ENCODE measurements at regions of chr3 and their contacts with region 1.

Region 1: DNA sequence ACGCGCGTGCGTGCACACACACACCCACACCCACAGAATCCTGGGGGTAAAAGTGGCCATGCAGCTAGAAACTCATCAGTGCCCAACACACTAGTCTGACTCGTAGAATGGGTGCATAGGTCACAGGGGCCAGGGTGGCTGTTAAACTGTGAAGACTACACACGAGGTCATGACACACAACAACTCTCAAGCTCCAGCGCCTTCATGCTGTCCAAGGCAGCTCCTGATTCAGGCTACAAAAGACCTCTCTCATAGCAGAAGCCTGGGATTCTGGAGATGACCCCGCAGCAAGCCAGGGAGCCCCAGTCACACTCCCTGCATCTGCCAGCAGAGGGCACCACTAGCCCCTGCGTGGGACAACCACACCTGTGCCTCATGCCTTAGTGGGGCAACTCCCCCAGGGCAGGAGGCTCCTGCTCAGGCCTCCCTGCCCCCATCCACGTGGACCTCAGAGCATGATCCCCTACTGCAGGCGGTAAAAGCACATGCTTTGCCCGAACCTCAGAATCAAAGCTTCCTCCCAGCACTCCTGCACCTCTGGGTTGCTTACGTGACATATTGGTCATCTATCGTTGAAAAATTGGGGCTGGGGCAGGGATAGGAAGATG is 93.1 kb downstream of the LRIG1 start:
- DNase-seq: peak; percentile 55 to 84 (median 74)
- ATAC-seq: peak; percentile 86
- H3K4me3 ChIP-seq: no peak overlapping the region
- H3K4me3 Mint-ChIP-seq: no peak overlapping the region
- H3K27ac ChIP-seq: no peak overlapping the region
- H3K27ac Mint-ChIP-seq: no peak overlapping the region
- H3K4me1 ChIP-seq: no peaks in the 10 kb centered on the region
- H3K4me1 Mint-ChIP-seq: no peaks in the 10 kb centered on the region
- H3K27me3 ChIP-seq: no peaks in the 10 kb centered on the region
- H3K27me3 Mint-ChIP-seq: no peaks in the 10 kb centered on the region
- CTCF ChIP-seq: peak; percentile 78

Region 2: DNA sequence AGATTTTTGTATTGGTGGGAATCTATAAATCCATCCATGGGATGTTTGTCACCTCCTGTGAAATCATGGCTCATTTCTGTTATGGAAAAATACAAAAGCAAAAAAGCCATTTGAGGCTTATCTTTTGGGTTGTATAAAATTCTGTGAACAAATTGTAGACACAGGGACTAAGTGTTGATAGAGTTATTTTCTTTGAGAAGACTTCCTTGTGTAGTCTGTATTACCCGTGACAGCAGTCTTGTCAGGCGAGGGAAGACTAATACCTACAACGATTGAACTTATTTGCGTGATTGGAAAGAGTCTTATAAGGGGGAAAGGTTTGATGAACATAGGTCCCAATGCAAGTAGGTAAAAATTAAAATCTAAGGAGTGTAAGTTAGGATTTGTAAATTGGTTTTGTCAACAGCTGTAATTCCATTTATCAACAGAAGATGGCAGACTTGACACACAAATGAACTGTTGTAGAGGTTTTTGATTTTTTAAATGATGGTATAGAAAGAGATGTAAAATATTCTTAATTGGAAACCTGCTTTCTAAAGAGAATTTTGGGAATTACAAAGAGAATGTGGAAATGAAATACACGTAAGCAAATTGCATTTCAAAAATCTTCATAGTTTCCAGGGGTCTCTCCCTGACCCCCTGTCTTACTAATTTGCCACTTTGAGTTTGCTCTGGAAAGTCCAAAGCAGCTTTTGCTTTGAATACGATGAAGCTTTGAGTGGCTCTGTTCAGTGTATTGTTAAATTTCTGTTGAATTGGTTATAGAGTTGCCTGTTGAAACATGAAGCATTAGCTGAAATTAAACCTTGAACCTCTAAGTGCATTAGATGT is 153.7 kb before region 1 on chr3:
- CTCF ChIA-PET with region 1: interaction called, 35 read pairs
- POLR2A ChIA-PET with region 1: no interaction called
- intact Hi-C with region 1: no loop called
- DNase-seq: peak in 2 of 9 experiments; percentile 51 to 60
- ATAC-seq: peak; percentile 38
- H3K4me3 ChIP-seq: no peak overlapping the region
- H3K4me3 Mint-ChIP-seq: no peak overlapping the region
- H3K27ac ChIP-seq: no peak overlapping the region
- H3K27ac Mint-ChIP-seq: no peak overlapping the region
- H3K4me1 ChIP-seq: no peaks in the 10 kb centered on the region
- H3K4me1 Mint-ChIP-seq: peaks cover 8% of the 10 kb centered on the region
- H3K27me3 ChIP-seq: no peaks in the 10 kb centered on the region
- H3K27me3 Mint-ChIP-seq: no peaks in the 10 kb centered on the region
- CTCF ChIP-seq: peak; percentile 84

Region 3: GRCh38 chr3:66276705-66277274 is 130.9 kb before region 1 on chr3:
- CTCF ChIA-PET with region 1: interaction called, 28 read pairs
- POLR2A ChIA-PET with region 1: no interaction called
- intact Hi-C with region 1: loop called in 1 of 2 experiments (anchors 1 kb)
- DNase-seq: peak; percentile 42 to 84 (median 64)
- ATAC-seq: peak; percentile 71
- H3K4me3 ChIP-seq: no peak overlapping the region
- H3K4me3 Mint-ChIP-seq: no peak overlapping the region
- H3K27ac ChIP-seq: no peak overlapping the region
- H3K27ac Mint-ChIP-seq: peak overlapping the region; percentile 34
- H3K4me1 ChIP-seq: peaks cover 10% of the 10 kb centered on the region
- H3K4me1 Mint-ChIP-seq: peaks cover 37% of the 10 kb centered on the region
- H3K27me3 ChIP-seq: no peaks in the 10 kb centered on the region
- H3K27me3 Mint-ChIP-seq: no peaks in the 10 kb centered on the region
- CTCF ChIP-seq: peak; percentile 80

Region 4: DNA sequence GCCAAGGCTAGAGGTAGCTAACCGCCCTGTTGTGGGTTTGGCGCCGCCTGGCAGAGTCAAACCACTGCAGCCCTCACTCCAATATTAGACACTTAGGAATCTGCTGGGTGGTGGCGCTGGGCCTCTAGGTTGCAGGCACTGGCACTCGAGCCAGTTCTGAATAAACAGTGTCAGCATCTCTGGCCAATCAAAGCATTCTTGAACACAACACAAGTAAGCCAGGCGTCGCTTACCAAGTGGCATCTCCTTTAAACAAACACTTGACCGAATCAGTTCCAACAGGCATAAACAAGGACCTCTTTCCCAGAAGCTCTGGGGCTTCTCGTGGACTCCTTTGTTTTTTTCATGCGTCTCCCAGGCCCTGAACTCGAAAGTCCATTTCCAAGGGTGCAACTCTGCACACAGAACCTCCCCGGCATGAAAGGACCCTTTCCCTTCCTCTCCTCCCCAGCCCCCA is 10.8 kb after region 1 on chr3:
- CTCF ChIA-PET with region 1: interaction called, 13 read pairs
- POLR2A ChIA-PET with region 1: no interaction called
- intact Hi-C with region 1: no loop called
- DNase-seq: no peak
- ATAC-seq: no peak
- H3K4me3 ChIP-seq: no peak overlapping the region
- H3K4me3 Mint-ChIP-seq: no peak overlapping the region
- H3K27ac ChIP-seq: no peak overlapping the region
- H3K27ac Mint-ChIP-seq: no peak overlapping the region
- H3K4me1 ChIP-seq: no peaks in the 10 kb centered on the region
- H3K4me1 Mint-ChIP-seq: peaks cover 20% of the 10 kb centered on the region
- H3K27me3 ChIP-seq: no peaks in the 10 kb centered on the region
- H3K27me3 Mint-ChIP-seq: no peaks in the 10 kb centered on the region
- CTCF ChIP-seq: no peak

Region 5: GRCh38 chr3:66472313-66473134 is 64.8 kb after region 1 on chr3:
- CTCF ChIA-PET with region 1: interaction called, 10 read pairs
- POLR2A ChIA-PET with region 1: no interaction called
- intact Hi-C with region 1: no loop called
- DNase-seq: peak in 4 of 9 experiments; percentile 21 to 58 (median 40)
- ATAC-seq: peak; percentile 74
- H3K4me3 ChIP-seq: peak overlapping the region in 1 of 2 experiments; percentile 25
- H3K4me3 Mint-ChIP-seq: peak overlapping the region; percentile 51
- H3K27ac ChIP-seq: no peak overlapping the region
- H3K27ac Mint-ChIP-seq: peak overlapping the region; percentile 18
- H3K4me1 ChIP-seq: peaks cover 14% of the 10 kb centered on the region
- H3K4me1 Mint-ChIP-seq: peaks cover 36% of the 10 kb centered on the region
- H3K27me3 ChIP-seq: no peaks in the 10 kb centered on the region
- H3K27me3 Mint-ChIP-seq: no peaks in the 10 kb centered on the region
- CTCF ChIP-seq: no peak

Region 6: GRCh38 chr3:66803206-66803605 is 395.5 kb after region 1 on chr3:
- CTCF ChIA-PET with region 1: interaction called, 11 read pairs
- POLR2A ChIA-PET with region 1: no interaction called
- intact Hi-C with region 1: no loop called
- DNase-seq: no peak
- ATAC-seq: no peak
- H3K4me3 ChIP-seq: no peak overlapping the region
- H3K4me3 Mint-ChIP-seq: no peak overlapping the region
- H3K27ac ChIP-seq: no peak overlapping the region
- H3K27ac Mint-ChIP-seq: no peak overlapping the region
- H3K4me1 ChIP-seq: no peaks in the 10 kb centered on the region
- H3K4me1 Mint-ChIP-seq: peaks cover 2% of the 10 kb centered on the region
- H3K27me3 ChIP-seq: no peaks in the 10 kb centered on the region
- H3K27me3 Mint-ChIP-seq: peaks cover 17% of the 10 kb centered on the region
- CTCF ChIP-seq: no peak

Region 7: GRCh38 chr3:66822186-66823008 is 414.7 kb after region 1 on chr3:
- CTCF ChIA-PET with region 1: interaction called, 134 read pairs
- POLR2A ChIA-PET with region 1: no interaction called
- intact Hi-C with region 1: no loop called
- DNase-seq: peak; percentile 40 to 72 (median 67)
- ATAC-seq: peak; percentile 64
- H3K4me3 ChIP-seq: no peak overlapping the region
- H3K4me3 Mint-ChIP-seq: no peak overlapping the region
- H3K27ac ChIP-seq: no peak overlapping the region
- H3K27ac Mint-ChIP-seq: no peak overlapping the region
- H3K4me1 ChIP-seq: no peaks in the 10 kb centered on the region
- H3K4me1 Mint-ChIP-seq: no peaks in the 10 kb centered on the region
- H3K27me3 ChIP-seq: no peaks in the 10 kb centered on the region
- H3K27me3 Mint-ChIP-seq: peaks cover 8% of the 10 kb centered on the region
- CTCF ChIP-seq: peak; percentile 60

Measured in CD8-positive, alpha-beta T cell (primary cell).